ENCODE measurements at regions of chr18 and their contacts with region 1.

Region 1: DNA sequence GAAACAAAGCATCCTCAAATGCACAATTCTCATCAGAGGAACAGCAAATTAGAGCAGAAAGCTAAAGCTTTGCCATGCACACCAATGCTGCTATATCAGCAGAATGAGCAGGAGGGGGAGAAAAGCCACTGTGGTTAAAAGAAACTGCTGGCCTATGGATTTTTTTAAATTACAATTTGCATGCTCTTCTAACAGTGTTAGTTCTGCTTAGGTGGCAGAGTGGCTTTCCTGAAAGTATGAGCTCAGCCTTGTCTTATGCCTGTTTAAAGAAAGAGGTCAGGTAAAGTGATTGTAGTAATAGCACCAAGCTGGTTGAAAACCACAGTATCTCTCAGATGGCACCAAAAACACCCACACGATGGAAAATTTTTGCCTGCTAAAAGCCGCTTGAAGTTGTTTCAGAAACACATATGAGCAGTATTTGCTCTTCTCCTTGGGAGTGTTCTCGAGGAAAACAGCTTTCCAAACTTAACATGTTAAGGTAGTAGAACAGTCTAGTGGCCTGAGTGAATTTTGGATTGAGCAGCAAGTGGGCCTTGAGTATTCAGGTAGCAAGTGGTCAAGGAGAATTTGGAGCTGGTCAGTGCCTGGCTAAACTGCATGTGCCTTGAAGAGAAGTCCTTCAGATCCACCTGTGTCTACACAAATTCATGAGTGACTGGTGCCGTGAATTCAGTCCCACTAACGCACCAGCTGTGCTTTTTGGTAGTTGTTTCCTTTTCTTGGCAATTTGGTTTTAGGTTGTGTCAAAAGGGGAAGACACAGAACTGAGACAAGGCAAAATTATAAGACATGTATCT is 19.6 kb upstream of the NDUFV2 start:
- DNase-seq: peak; percentile 53 to 81 (median 66)
- H3K4me3 ChIP-seq: peak overlapping the region in 1 of 2 donors; percentile 25
- H3K4me3 Mint-ChIP-seq: peak overlapping the region; percentile 43 to 84 (median 68)
- H3K27ac ChIP-seq: peak overlapping the region; percentile 58
- H3K27ac Mint-ChIP-seq: peak overlapping the region; percentile 92 to 97 (median 95)
- H3K4me1 ChIP-seq: peaks cover 54% of the 10 kb centered on the region
- H3K4me1 Mint-ChIP-seq: peaks cover 27 to 50% (median 40%) of the 10 kb centered on the region in 4 donors
- H3K27me3 ChIP-seq: no peaks in the 10 kb centered on the region
- H3K27me3 Mint-ChIP-seq: no peaks in the 10 kb centered on the region

Region 2: GRCh38 chr18:8615397-8616027 is 467.4 kb before region 1 on chr18:
- CTCF ChIA-PET with region 1: no interaction called
- POLR2A ChIA-PET with region 1: no interaction called
- intact Hi-C with region 1: no loop called
- DNase-seq: no peak
- H3K4me3 ChIP-seq: no peak overlapping the region
- H3K4me3 Mint-ChIP-seq: peak overlapping the region in 1 of 8 donors; percentile 54
- H3K27ac ChIP-seq: no peak overlapping the region
- H3K27ac Mint-ChIP-seq: peak overlapping the region in 2 of 7 donors; percentile 13 to 55
- H3K4me1 ChIP-seq: peaks cover 44% of the 10 kb centered on the region
- H3K4me1 Mint-ChIP-seq: peaks cover 53 to 94% (median 74%) of the 10 kb centered on the region in 4 donors
- H3K27me3 ChIP-seq: no peaks in the 10 kb centered on the region
- H3K27me3 Mint-ChIP-seq: no peaks in the 10 kb centered on the region

Region 3: DNA sequence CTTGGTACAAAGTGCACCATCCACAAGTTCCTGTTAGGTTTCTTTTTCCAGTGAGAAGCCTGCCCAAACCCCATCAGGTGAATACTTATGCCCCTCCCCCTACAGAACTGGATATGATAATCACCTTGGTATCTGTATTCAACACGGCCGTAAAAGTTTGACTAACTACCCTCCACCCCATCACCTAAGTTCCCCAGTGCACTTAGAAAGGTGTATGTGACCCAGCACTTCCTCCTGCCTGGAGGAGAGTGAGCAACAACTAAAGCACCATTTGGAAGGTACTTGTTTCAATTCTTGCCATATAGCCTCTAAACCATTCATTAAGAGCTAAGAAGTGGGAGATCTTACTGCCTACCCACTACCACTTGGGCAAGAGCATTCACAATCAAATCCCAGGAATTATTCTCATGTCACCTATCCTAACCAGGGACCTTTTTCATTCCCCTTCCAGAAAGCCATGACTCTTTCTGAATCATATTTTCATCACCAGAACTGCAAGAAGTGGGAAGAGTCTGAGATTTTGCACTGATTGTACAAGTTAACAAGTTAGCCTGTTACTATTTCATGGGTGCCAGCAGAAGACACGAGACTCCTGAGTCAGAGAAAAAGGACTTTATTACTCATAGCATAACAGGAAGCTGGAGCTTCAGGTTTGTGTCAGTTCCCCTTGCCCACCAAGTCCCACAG is 34.0 kb before region 1 on chr18:
- CTCF ChIA-PET with region 1: no interaction called
- POLR2A ChIA-PET with region 1: no interaction called
- intact Hi-C with region 1: no loop called
- DNase-seq: no peak
- H3K4me3 ChIP-seq: no peak overlapping the region
- H3K4me3 Mint-ChIP-seq: no peak overlapping the region
- H3K27ac ChIP-seq: no peak overlapping the region
- H3K27ac Mint-ChIP-seq: no peak overlapping the region
- H3K4me1 ChIP-seq: no peaks in the 10 kb centered on the region
- H3K4me1 Mint-ChIP-seq: peaks cover 0 to 4% (median 1%) of the 10 kb centered on the region in 4 donors
- H3K27me3 ChIP-seq: no peaks in the 10 kb centered on the region
- H3K27me3 Mint-ChIP-seq: no peaks in the 10 kb centered on the region

Region 4: GRCh38 chr18:9109523-9109922 is 26.6 kb after region 1 on chr18:
- CTCF ChIA-PET with region 1: interaction called, 4 read pairs
- POLR2A ChIA-PET with region 1: interaction called, 73 read pairs
- intact Hi-C with region 1: no loop called
- DNase-seq: no peak
- H3K4me3 ChIP-seq: no peak overlapping the region
- H3K4me3 Mint-ChIP-seq: peak overlapping the region; percentile 27 to 85 (median 74)
- H3K27ac ChIP-seq: peak overlapping the region; percentile 82
- H3K27ac Mint-ChIP-seq: peak overlapping the region; percentile 61 to 95 (median 84)
- H3K4me1 ChIP-seq: peaks cover 100% of the 10 kb centered on the region
- H3K4me1 Mint-ChIP-seq: peaks cover 63 to 95% (median 79%) of the 10 kb centered on the region in 4 donors
- H3K27me3 ChIP-seq: no peaks in the 10 kb centered on the region
- H3K27me3 Mint-ChIP-seq: no peaks in the 10 kb centered on the region

Region 5: DNA sequence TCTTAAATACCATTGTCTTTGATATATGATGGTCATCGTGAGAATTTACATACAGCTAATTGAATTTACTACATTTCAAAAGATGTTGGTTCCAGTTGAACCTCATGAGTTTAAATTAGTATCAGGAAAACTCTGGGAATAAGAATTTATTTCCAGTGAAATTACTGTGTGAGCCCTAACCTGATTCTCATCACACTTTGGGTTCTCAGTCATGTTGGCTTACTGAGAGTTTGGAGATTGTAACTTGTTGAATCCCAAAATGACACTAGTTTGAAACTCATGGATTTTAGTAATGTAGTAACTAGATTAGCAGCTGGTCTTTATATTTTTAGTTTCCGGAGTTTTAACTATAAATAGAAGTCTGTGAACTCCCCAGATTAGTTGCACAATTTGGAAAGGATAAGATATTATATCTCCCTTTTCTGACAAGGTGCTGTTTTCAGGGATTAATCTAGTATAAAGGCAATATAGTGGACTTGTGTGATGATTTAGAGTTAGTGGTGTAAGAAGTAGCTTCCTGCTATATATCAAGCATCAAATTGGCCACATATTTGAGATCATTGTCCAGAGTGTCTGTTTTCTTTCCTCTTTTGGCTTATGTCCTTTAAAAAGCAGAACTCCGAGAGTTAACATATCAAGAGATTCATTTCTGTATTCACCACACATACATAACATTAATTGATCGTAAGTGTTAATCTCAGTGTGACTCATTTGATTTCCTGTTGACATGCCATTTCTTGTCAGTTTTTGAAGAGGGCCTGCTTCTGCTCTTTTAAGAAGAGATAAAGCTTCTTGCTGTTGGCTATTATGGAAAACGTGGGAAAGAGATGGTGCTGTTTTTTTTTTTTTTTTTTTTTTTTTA is 35.3 kb after region 1 on chr18:
- CTCF ChIA-PET with region 1: interaction called, 14 read pairs
- POLR2A ChIA-PET with region 1: interaction called, 44 read pairs
- intact Hi-C with region 1: loop called (anchors 1 kb)
- DNase-seq: peak in 4 of 5 donors; percentile 47 to 54 (median 52)
- H3K4me3 ChIP-seq: peak overlapping the region; percentile 8 to 28
- H3K4me3 Mint-ChIP-seq: peak overlapping the region; percentile 62 to 91 (median 84)
- H3K27ac ChIP-seq: peak overlapping the region; percentile 80
- H3K27ac Mint-ChIP-seq: peak overlapping the region; percentile 96 to 100 (median 98)
- H3K4me1 ChIP-seq: peaks cover 98% of the 10 kb centered on the region
- H3K4me1 Mint-ChIP-seq: peaks cover 51 to 86% (median 69%) of the 10 kb centered on the region in 4 donors
- H3K27me3 ChIP-seq: no peaks in the 10 kb centered on the region
- H3K27me3 Mint-ChIP-seq: no peaks in the 10 kb centered on the region

Measured in CD4-positive, alpha-beta memory T cell (primary cell).